Left lung (tissue), 14 donors: ENCODE measurements at regions of chr20 and their contacts with region 1.

Region 1: GRCh38 chr20:12659942-12660341 is 348.8 kb upstream of the SPTLC3 start:
- DNase-seq: no peak
- ATAC-seq: no peak
- H3K4me3 ChIP-seq: no peak overlapping the region
- H3K27ac ChIP-seq: no peak overlapping the region
- H3K4me1 ChIP-seq: no peaks in the 10 kb centered on the region
- H3K27me3 ChIP-seq: no peaks in the 10 kb centered on the region
- CTCF ChIP-seq: no peak

Region 2: DNA sequence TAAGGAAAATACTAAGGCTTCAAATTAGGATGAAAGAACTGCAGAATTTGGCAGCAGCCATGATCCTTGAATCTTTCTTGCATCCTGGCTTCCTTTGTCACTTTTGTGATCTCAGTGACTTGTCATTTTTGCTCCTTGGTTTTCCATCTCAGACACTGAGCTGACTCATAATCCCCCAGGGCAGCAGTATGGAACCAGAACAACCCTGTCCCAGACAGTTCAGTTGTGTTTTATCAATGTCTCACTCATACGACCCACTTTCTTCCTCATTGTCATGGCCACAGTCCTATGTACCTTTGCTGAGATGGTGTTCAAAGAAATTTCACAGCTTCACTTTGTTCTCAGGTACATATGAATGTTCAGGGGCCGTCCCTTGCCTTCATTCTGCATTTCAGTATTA is 1230.8 kb before region 1 on chr20:
- intact Hi-C with region 1: no loop called
- DNase-seq: no peak
- ATAC-seq: no peak
- H3K4me3 ChIP-seq: no peak overlapping the region
- H3K27ac ChIP-seq: no peak overlapping the region
- H3K4me1 ChIP-seq: no peaks in the 10 kb centered on the region
- H3K27me3 ChIP-seq: no peaks in the 10 kb centered on the region
- CTCF ChIP-seq: no peak

Region 3: DNA sequence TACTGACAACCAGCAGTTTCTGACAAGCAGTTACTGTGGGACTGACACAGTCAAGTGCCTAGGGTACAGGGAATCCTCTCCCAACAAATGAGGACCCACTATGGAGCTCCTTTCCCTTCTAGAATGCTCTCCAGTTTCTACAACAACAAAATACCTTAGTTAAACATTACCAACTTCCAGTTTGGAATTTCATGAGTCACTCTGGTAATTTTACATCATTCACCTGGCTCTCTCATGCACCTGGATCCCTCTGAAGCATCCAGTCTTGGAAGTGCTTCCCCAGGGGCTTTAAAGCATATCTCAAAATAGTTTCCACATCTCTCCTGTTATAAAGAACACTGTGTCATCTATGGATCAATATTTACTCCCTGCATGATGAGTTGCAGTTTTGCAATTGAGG is 62.2 kb after region 1 on chr20:
- intact Hi-C with region 1: loop called in 1 of 2 experiments (anchors 10 kb)
- DNase-seq: no peak
- ATAC-seq: no peak
- H3K4me3 ChIP-seq: no peak overlapping the region
- H3K27ac ChIP-seq: no peak overlapping the region
- H3K4me1 ChIP-seq: no peaks in the 10 kb centered on the region
- H3K27me3 ChIP-seq: no peaks in the 10 kb centered on the region
- CTCF ChIP-seq: no peak